ENCODE measurements at regions of chr2 and their contacts with region 1.

Region 1: DNA sequence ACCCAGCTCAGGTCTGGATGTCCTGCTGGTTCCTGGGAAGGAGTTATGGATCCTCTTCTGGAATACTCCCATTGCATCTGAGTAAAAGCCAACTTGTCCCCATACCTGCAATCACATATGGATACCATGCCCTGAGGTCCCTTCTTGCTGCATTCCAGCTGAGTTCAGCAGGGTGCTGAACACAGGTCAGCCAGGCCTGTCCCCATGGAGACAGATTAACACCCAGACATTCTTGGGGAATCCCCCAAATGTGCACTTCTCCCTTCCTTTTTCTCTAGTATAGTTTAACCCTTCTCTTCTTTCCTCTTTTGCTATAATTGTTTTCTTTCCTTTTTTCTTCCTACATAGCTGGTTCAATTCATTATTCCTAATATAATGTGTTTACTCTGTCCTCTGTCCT is 799.6 kb upstream of the HS6ST1 start:
- DNase-seq: no peak
- H3K4me3 ChIP-seq: no peak overlapping the region
- H3K27ac ChIP-seq: no peak overlapping the region
- H3K4me1 ChIP-seq: no peaks in the 10 kb centered on the region
- H3K27me3 ChIP-seq: no peaks in the 10 kb centered on the region
- CTCF ChIP-seq: no peak
- EP300 ChIP-seq: no peak
- POLR2A ChIP-seq: no peak

Region 2: GRCh38 chr2:129080715-129081476 is 37.4 kb before region 1 on chr2:
- in situ Hi-C with region 1: no loop called
- intact Hi-C with region 1: loop called (anchors 1 kb)
- DNase-seq: no peak
- H3K4me3 ChIP-seq: no peak overlapping the region
- H3K27ac ChIP-seq: no peak overlapping the region
- H3K4me1 ChIP-seq: no peaks in the 10 kb centered on the region
- H3K27me3 ChIP-seq: no peaks in the 10 kb centered on the region
- CTCF ChIP-seq: no peak
- EP300 ChIP-seq: no peak
- POLR2A ChIP-seq: no peak

Region 3: GRCh38 chr2:129103936-129104879 is 14.1 kb before region 1 on chr2:
- in situ Hi-C with region 1: no loop called
- intact Hi-C with region 1: no loop called
- DNase-seq: no peak
- H3K4me3 ChIP-seq: no peak overlapping the region
- H3K27ac ChIP-seq: no peak overlapping the region
- H3K4me1 ChIP-seq: no peaks in the 10 kb centered on the region
- H3K27me3 ChIP-seq: no peaks in the 10 kb centered on the region
- CTCF ChIP-seq: no peak
- EP300 ChIP-seq: no peak
- POLR2A ChIP-seq: no peak

Region 4: GRCh38 chr2:129191235-129191929 is 73.1 kb after region 1 on chr2:
- in situ Hi-C with region 1: no loop called
- intact Hi-C with region 1: no loop called
- DNase-seq: no peak
- H3K4me3 ChIP-seq: no peak overlapping the region
- H3K27ac ChIP-seq: no peak overlapping the region
- H3K4me1 ChIP-seq: no peaks in the 10 kb centered on the region
- H3K27me3 ChIP-seq: no peaks in the 10 kb centered on the region
- CTCF ChIP-seq: no peak
- EP300 ChIP-seq: no peak
- POLR2A ChIP-seq: no peak

Region 5: DNA sequence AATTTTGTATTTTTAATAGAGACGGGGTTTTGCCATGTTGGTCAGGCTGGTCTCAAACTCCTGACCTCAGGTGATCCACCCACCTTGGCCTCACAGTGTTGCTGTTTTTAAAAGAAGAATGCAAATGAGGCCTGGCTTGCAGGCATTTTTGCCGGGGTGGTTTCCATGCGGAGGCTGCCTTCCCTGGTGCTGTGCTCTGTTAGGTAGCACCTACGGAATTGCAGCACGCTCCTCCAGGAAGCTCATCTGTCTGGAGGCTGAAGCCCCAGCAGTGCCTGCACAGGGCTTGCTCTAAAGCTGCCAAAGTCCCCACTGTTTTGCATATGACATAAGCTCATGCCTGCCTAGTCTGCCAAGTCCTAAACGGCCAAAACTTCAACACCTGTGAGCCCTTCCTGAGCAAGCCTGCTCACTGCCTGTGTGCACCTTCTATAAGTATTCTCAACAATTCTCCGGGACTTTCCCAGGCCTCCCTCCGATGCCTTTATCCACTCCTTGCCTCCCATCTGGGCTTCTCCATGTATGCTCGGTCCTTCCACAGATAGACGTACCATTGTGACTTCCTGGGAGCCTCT is 309.9 kb after region 1 on chr2:
- in situ Hi-C with region 1: no loop called
- intact Hi-C with region 1: no loop called
- DNase-seq: no peak
- H3K4me3 ChIP-seq: no peak overlapping the region
- H3K27ac ChIP-seq: no peak overlapping the region
- H3K4me1 ChIP-seq: no peaks in the 10 kb centered on the region
- H3K27me3 ChIP-seq: no peaks in the 10 kb centered on the region
- CTCF ChIP-seq: no peak
- EP300 ChIP-seq: no peak
- POLR2A ChIP-seq: no peak